Psoas muscle (tissue), 8 donors: ENCODE measurements at regions of chr17 and their contacts with region 1.

Region 1: GRCh38 chr17:68172461-68172954 is 75.3 kb upstream of the AMZ2 start:
- DNase-seq: peak; percentile 61 to 80
- ATAC-seq: peak; percentile 83 to 90 (median 86)
- H3K4me3 ChIP-seq: no peak overlapping the region
- H3K27ac ChIP-seq: no peak overlapping the region
- H3K4me1 ChIP-seq: no peaks in the 10 kb centered on the region
- H3K27me3 ChIP-seq: no peaks in the 10 kb centered on the region
- CTCF ChIP-seq: peak; percentile 98

Region 2: DNA sequence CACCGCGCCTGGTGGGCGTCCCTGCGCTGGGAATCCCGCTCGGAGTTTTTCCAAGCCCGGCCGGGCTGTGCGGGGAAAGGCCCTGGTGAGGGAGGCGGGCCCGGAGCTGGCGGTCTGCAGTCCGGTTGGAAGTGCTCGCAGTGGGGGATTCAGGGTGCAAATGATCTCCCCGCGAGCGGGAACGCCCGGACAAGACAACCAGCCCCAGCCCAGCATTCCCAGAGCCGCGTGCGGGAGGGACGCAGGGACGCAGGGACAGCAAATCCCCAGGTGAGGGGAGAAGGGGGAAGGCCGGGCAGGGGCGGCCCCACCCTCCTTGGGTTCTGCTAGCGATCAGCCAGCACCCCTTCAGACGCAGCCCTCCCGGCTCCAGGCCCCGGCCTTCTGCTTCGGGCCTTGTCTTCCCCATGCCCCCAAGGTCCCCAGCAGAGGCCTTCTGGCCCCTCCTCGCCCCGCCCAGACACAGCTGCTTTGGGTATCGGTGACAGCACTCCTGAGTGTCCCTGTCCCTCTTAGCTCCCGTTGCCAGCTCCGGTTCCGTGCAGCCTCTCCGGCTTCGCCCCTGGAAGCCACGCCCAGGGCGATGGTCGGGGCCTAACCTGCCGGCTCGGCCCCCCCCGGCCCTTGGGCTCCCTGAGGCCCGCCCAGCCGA is 24.6 kb after region 1 on chr17:
- intact Hi-C with region 1: loop called (anchors 1 to 2 kb)
- DNase-seq: peak; percentile 36 to 70
- ATAC-seq: peak; percentile 26 to 51 (median 43)
- H3K4me3 ChIP-seq: peak overlapping the region; percentile 66
- H3K27ac ChIP-seq: no peak overlapping the region
- H3K4me1 ChIP-seq: peaks cover 29% of the 10 kb centered on the region
- H3K27me3 ChIP-seq: peaks cover 0 to 54% (median 38%) of the 10 kb centered on the region in 3 donors
- CTCF ChIP-seq: no peak

Region 3: GRCh38 chr17:68205251-68205807 is 32.8 kb after region 1 on chr17:
- intact Hi-C with region 1: loop called in 1 of 2 experiments (anchors 1 kb)
- DNase-seq: peak; percentile 94 to 96
- ATAC-seq: peak; percentile 91 to 94 (median 92)
- H3K4me3 ChIP-seq: peak overlapping the region; percentile 85
- H3K27ac ChIP-seq: peak overlapping the region; percentile 71
- H3K4me1 ChIP-seq: peaks cover 12% of the 10 kb centered on the region
- H3K27me3 ChIP-seq: no peaks in the 10 kb centered on the region
- CTCF ChIP-seq: peak; percentile 92

Region 4: GRCh38 chr17:68759343-68760132 is 587.0 kb after region 1 on chr17:
- intact Hi-C with region 1: loop called in 1 of 2 experiments (anchors 10 kb)
- DNase-seq: peak; percentile 86 to 91
- ATAC-seq: peak; percentile 98 to 99 (median 98)
- H3K4me3 ChIP-seq: peak overlapping the region; percentile 60
- H3K27ac ChIP-seq: peak overlapping the region; percentile 89
- H3K4me1 ChIP-seq: no peaks in the 10 kb centered on the region
- H3K27me3 ChIP-seq: no peaks in the 10 kb centered on the region
- CTCF ChIP-seq: peak; percentile 85